ENCODE measurements at regions of chr6 and their contacts with region 1.

Region 1: DNA sequence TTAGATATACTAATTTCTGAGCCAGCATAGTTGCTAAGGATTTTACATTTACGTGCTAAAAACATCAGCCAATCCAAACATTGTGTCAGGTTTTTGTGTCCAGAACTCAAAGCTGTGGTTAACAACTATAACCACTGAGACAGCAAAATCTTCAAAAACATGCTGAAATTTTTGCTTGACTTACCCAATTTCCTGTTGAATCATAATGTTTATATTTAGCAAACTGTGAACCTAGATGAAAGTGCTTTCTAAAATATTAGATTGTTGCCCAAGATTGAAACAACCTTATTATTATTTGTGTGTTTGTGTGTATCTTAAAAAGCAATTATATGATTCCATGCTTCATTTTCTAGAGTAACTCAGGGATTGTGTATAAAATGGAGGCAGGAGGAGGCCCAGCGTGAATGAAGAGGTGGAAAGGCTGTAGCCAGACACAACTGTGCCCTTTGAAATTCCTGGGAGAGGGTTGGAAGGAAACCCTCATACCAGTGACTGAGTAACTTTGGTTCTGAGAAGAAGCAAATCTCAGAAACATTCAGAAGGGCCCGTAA is 48.0 kb downstream of the ARMC2 start:
- DNase-seq: no peak
- H3K4me3 ChIP-seq: no peak overlapping the region
- H3K27ac ChIP-seq: peak overlapping the region; percentile 15 to 62 (median 48)
- H3K4me1 ChIP-seq: peaks cover 0 to 3% (median 0%) of the 10 kb centered on the region in 4 donors
- H3K27me3 ChIP-seq: no peaks in the 10 kb centered on the region
- CTCF ChIP-seq: no peak
- EP300 ChIP-seq: peak in 2 of 4 donors; percentile 50 to 56
- POLR2A ChIP-seq: no peak

Region 2: GRCh38 chr6:108848116-108848868 is 47.9 kb before region 1 on chr6 and contains the start of gene ARMC2:
- intact Hi-C with region 1: loop called (anchors 5 kb)
- DNase-seq: peak; percentile 94
- H3K4me3 ChIP-seq: peak within 1 kb of the TSS; percentile 52 to 75 (median 64)
- H3K27ac ChIP-seq: peak within 1 kb of the TSS; percentile 77 to 86 (median 82)
- H3K4me1 ChIP-seq: peaks cover 0 to 11% (median 8%) of the 10 kb centered on the region in 4 donors
- H3K27me3 ChIP-seq: no peaks in the 10 kb centered on the region
- CTCF ChIP-seq: no peak
- EP300 ChIP-seq: peak in 1 of 4 donors; percentile 21
- POLR2A ChIP-seq: peak in 1 of 2 donors; percentile 70
- total RNA-seq, gene ARMC2: 2.5 to 8.6 (median 3.4) TPM

Region 3: GRCh38 chr6:108862479-108863191 is 33.6 kb before region 1 on chr6:
- intact Hi-C with region 1: no loop called
- DNase-seq: no peak
- H3K4me3 ChIP-seq: no peak overlapping the region
- H3K27ac ChIP-seq: no peak overlapping the region
- H3K4me1 ChIP-seq: peaks cover 0 to 15% (median 8%) of the 10 kb centered on the region in 4 donors
- H3K27me3 ChIP-seq: no peaks in the 10 kb centered on the region
- CTCF ChIP-seq: no peak
- EP300 ChIP-seq: no peak
- POLR2A ChIP-seq: no peak

Region 4: DNA sequence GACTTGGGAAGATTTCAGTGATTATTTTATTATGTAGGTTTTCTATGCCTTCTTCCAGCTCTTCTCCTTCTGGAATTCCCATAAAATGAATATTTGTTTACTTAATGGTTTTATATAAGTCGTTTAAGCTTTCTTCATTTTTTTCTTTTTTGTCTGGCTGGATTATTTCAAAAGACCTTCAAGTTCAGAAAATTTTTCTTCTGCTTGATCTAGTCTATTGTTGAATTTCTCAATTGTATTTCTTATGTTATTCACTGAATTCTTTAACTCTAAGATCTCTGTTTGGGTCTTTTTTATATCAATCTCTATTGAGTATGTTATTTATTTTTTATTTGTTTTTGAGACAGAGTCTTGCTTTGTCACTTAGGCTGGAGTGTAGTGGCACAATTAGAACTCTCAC is 316.5 kb after region 1 on chr6:
- intact Hi-C with region 1: no loop called
- DNase-seq: no peak
- H3K4me3 ChIP-seq: no peak overlapping the region
- H3K27ac ChIP-seq: no peak overlapping the region
- H3K4me1 ChIP-seq: no peaks in the 10 kb centered on the region
- H3K27me3 ChIP-seq: no peaks in the 10 kb centered on the region
- CTCF ChIP-seq: no peak
- EP300 ChIP-seq: no peak
- POLR2A ChIP-seq: no peak

Region 5: GRCh38 chr6:109322825-109323224 is 426.6 kb after region 1 on chr6:
- intact Hi-C with region 1: no loop called
- DNase-seq: peak; percentile 72
- H3K4me3 ChIP-seq: no peak overlapping the region
- H3K27ac ChIP-seq: no peak overlapping the region
- H3K4me1 ChIP-seq: no peaks in the 10 kb centered on the region
- H3K27me3 ChIP-seq: no peaks in the 10 kb centered on the region
- CTCF ChIP-seq: no peak
- EP300 ChIP-seq: no peak
- POLR2A ChIP-seq: no peak